Activated CD4-positive, alpha-beta memory T cell treated with anti-CD3 and anti-CD28 coated beads for 36 hours (primary cell): ENCODE measurements at regions of chr1 and their contacts with region 1.

Region 1: GRCh38 chr1:31010086-31010989 is 55.2 kb downstream of the PUM1 start:
- DNase-seq: peak; percentile 46
- H3K4me3 Mint-ChIP-seq: peak overlapping the region; percentile 16
- H3K27ac Mint-ChIP-seq: peak overlapping the region; percentile 75
- H3K4me1 Mint-ChIP-seq: peaks cover 72% of the 10 kb centered on the region
- H3K27me3 Mint-ChIP-seq: no peaks in the 10 kb centered on the region

Region 2: DNA sequence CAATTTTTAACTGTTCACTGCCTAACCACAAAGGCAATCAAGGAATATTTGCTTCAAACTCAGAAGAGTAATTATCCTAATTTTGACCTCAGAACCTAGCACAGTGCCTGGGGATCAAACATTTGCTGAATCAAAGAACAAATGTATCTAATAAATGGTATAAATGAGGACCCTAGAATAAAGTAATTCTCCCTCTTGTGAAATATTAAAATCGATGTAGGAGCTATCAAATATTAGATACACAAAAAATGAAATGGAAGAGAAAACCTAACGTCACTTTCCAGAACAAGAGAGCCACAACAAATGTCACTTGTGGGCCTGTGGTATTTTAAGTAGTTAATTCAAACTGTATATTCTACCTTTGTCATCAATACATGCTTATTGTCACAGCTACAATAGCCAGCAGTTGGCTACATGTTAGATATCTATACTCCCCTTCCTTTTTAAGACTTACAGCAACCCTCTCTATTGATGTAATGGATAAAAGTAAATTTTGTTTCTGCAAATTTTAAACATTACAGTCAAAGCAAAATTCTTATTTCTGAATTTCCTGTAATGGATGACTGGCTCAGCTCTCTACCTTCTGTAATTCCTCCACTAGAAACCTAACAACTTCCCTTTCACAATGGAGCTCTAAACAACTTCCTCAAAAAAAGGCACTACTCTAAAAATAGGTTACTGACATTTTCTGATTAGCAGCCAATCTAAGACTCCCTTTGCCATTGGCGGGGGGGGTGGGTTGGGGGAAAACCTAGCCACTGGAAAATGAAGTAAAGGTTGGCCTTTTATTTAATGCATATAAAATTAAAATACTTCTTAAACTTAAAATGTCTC is 17.6 kb after region 1 on chr1:
- CTCF ChIA-PET with region 1: no interaction called
- POLR2A ChIA-PET with region 1: interaction called, 8 read pairs
- intact Hi-C with region 1: loop called (anchors 1 kb)
- DNase-seq: no peak
- H3K4me3 Mint-ChIP-seq: no peak overlapping the region
- H3K27ac Mint-ChIP-seq: peak overlapping the region; percentile 7
- H3K4me1 Mint-ChIP-seq: peaks cover 70% of the 10 kb centered on the region
- H3K27me3 Mint-ChIP-seq: no peaks in the 10 kb centered on the region

Region 3: GRCh38 chr1:31036749-31037500 is 26.6 kb after region 1 on chr1:
- CTCF ChIA-PET with region 1: no interaction called
- POLR2A ChIA-PET with region 1: interaction called, 20 read pairs
- intact Hi-C with region 1: loop called (anchors 1 kb)
- DNase-seq: no peak
- H3K4me3 Mint-ChIP-seq: no peak overlapping the region
- H3K27ac Mint-ChIP-seq: peak overlapping the region; percentile 36
- H3K4me1 Mint-ChIP-seq: peaks cover 65% of the 10 kb centered on the region
- H3K27me3 Mint-ChIP-seq: no peaks in the 10 kb centered on the region

Region 4: GRCh38 chr1:31054349-31054748 is 44.0 kb after region 1 on chr1:
- CTCF ChIA-PET with region 1: no interaction called
- POLR2A ChIA-PET with region 1: interaction called, 6 read pairs
- intact Hi-C with region 1: loop called (anchors 1 kb)
- DNase-seq: peak; percentile 14
- H3K4me3 Mint-ChIP-seq: no peak overlapping the region
- H3K27ac Mint-ChIP-seq: peak overlapping the region; percentile 83
- H3K4me1 Mint-ChIP-seq: peaks cover 59% of the 10 kb centered on the region
- H3K27me3 Mint-ChIP-seq: no peaks in the 10 kb centered on the region

Region 5: GRCh38 chr1:31065310-31066217 is 55.2 kb after region 1 on chr1 and contains the start of gene PUM1:
- CTCF ChIA-PET with region 1: interaction called, 3 read pairs
- POLR2A ChIA-PET with region 1: interaction called, 13 read pairs
- intact Hi-C with region 1: loop called (anchors 1 kb)
- DNase-seq: peak; percentile 99
- H3K4me3 Mint-ChIP-seq: peak within 1 kb of the TSS; percentile 98
- H3K27ac Mint-ChIP-seq: peak within 1 kb of the TSS; percentile 100
- H3K4me1 Mint-ChIP-seq: peaks cover 22% of the 10 kb centered on the region
- H3K27me3 Mint-ChIP-seq: peaks cover 2% of the 10 kb centered on the region
- total RNA-seq, gene PUM1: 77.8 to 80.5 TPM

Region 6: DNA sequence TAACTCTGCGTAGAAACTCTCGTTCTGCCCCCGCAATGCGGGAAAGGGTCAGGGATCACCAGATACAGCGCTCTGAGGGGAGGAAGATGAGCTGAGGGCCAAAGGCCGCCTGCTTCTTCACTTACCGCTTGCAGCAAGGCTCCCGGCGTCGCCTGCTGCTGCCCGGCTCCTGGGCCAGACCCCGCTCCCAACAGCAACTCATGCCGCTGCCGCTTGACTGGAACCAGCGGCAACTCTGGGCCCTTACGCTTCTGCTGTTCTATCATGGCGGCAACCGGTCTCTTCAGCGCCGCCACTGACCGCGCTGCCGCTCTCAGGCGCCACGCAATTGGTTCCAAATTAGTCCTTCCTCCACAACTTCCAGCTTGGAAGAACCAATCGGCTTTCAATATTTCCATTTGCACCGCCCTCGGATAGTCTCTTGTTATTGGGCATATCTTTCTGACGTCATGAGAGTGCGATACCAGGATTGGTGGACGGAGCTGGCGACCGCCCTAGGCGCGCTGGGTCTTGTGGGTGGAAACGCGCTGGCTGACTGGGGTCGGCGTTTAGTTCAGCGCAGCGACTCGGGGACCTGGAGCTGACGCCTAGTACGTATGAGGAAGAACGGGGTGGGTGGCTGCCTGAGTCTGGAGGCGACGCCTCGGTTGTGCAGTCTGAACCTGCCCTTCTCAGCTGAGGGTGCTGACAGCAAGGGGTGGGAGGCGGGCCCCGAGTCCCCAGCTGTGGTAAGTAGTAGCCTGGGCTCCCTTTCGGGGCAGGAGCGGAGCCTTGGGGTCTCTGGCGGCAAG is 286.3 kb after region 1 on chr1 and contains the starts of genes SNRNP40 and ZCCHC17:
- CTCF ChIA-PET with region 1: no interaction called
- POLR2A ChIA-PET with region 1: no interaction called
- intact Hi-C with region 1: loop called (anchors 5 kb)
- DNase-seq: peak; percentile 95
- H3K4me3 Mint-ChIP-seq: no peak within 1 kb of the TSS
- H3K27ac Mint-ChIP-seq: no peak within 1 kb of the TSS
- H3K4me1 Mint-ChIP-seq: peaks cover 32% of the 10 kb centered on the region
- H3K27me3 Mint-ChIP-seq: no peaks in the 10 kb centered on the region
- total RNA-seq, gene SNRNP40: 83.7 to 96.4 TPM
- total RNA-seq, gene ZCCHC17: 24.4 to 29.6 TPM

Region 7: DNA sequence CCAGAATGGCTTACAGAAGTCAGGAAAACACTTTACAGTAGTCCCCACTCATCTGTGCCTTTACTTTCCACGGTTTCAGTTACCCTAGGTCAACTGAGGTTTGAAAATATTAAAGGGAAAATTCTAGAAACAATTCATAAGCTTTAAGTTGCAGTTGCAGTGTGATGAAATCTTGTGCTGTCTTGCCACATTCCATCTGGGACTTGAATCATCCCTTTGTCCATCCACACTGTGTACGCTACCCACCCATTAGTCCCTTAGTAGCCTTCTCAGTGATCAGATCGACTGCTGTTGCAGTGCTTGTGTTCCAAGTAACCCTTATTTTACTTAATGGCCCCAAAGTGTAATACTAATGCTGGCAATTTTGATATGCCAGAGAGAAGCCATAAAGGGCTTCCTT is 317.0 kb after region 1 on chr1:
- CTCF ChIA-PET with region 1: no interaction called
- POLR2A ChIA-PET with region 1: no interaction called
- intact Hi-C with region 1: no loop called
- DNase-seq: no peak
- H3K4me3 Mint-ChIP-seq: no peak overlapping the region
- H3K27ac Mint-ChIP-seq: no peak overlapping the region
- H3K4me1 Mint-ChIP-seq: no peaks in the 10 kb centered on the region
- H3K27me3 Mint-ChIP-seq: no peaks in the 10 kb centered on the region